HEK293T (cell line): ENCODE measurements at regions of chr16 and their contacts with region 1.

Region 1: DNA sequence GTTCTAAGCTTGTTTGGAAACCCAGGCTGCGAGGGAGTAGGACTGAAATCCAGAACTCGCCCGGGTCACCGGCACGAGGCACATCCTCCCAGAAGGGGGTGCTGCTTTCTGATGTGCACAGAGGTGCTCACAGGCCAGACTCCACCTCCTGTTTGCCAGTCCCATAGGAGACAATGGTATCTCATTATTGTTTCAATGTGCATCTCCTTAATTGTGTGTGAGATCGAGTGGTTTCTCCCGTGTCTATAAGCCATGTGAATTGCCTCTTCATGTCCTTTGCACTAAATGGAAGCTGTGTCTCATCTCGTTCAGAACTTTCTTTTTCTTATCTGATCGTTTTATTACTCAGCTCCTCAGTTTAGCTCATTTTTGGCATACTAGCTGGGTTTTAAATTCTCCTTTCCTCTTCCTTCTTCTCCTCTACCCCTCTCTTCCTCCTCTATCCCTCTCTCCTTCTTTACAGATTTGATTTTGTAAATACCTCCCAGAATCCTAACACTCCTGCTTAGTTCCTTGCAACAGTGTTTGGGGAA is 32.1 kb upstream of the PRKCB start:
- DNase-seq: peak; percentile 65

Region 2: DNA sequence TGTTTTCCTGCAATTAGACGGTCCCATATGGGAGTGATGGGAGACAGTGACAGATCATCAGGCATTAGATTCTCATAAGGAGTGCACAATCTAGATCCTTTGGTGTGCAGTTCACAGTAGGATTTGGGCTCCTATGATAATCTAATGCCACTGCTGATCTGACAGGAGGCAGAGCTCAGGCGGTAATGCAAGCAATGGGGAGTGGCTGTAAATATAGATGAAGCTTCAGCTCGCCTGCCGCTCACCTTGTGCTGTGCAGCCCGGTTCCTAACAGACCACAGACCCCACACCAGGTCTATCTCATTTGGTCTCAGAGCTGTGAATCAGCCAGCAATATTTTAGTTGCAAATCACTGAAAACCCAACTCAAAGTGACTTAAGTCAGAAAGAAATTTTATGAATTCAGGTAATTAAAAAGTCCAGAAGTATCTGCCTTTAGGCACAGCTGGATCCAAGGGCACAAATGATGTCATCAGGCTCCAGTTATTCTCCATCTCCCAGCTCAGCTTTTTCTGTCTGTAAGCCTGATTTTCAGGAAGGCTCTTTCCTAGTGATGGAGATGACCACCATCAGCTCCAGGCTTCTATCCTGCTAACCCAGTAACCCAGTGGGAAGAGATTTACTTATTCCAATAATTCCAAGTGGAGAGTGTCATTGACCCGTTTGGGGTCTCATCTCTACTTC is 45.6 kb before region 1 on chr16:
- CTCF ChIA-PET with region 1: interaction called, 15 read pairs
- POLR2A ChIA-PET with region 1: no interaction called
- DNase-seq: no peak

Region 3: GRCh38 chr16:24010440-24011089 is 206.9 kb after region 1 on chr16:
- CTCF ChIA-PET with region 1: interaction called, 10 read pairs
- POLR2A ChIA-PET with region 1: no interaction called
- DNase-seq: peak; percentile 67